HepG2 (cell line): ENCODE measurements at regions of chr6 and their contacts with region 1.

Region 1: DNA sequence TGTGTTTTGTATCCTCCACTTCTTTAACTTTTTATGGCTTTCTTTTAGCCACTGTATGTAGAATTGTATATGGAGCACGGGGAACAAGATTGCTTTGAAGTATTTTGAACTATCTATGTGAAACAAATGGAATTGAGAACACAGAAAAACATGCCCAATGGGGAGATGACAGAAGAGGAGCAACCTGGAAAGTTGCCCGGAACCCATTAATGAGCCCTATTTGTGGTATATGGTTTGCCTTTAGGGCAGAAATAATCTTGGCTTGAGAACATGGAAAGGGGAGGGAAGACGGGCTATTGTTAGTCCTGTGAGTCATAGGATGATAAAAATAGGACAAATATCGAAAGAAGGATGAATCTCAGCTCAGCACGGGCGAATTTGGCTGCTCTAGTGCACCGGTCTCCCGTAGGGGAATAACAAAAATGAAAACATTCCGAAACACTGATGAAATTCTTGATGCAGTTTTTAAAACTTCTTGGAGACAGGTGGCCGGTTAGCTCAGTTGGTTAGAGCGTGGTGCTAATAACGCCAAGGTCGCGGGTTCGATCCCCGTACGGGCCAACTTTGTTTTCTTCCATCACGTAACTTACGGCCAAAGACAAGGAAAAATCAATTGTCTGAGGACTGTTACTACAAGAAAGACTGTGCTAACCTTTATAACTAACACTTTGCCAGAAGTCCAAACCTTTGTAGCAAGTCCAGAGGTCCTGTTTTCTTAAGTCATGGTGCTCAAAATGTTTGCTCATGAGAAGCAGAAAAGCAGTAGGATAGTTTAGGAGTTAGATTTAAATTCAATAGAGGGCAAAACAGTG is 15.7 kb downstream of the HMGN4 start:
- DNase-seq: peak; percentile 81
- ATAC-seq: peak; percentile 39
- H3K4me3 ChIP-seq: peak overlapping the region; percentile 77 to 81 (median 80)
- H3K27ac ChIP-seq: peak overlapping the region; percentile 39
- H3K4me1 ChIP-seq: peaks cover 51% of the 10 kb centered on the region
- H3K27me3 ChIP-seq: no peaks in the 10 kb centered on the region; a peak in 1 of 5 replicates
- CTCF ChIP-seq: no peak
- EP300 ChIP-seq: no peak
- POLR2A ChIP-seq: no peak
- RAD21 ChIP-seq: 0 out of 2 replicates have a peak, but pooled peaks have one; percentile 5

Region 2: DNA sequence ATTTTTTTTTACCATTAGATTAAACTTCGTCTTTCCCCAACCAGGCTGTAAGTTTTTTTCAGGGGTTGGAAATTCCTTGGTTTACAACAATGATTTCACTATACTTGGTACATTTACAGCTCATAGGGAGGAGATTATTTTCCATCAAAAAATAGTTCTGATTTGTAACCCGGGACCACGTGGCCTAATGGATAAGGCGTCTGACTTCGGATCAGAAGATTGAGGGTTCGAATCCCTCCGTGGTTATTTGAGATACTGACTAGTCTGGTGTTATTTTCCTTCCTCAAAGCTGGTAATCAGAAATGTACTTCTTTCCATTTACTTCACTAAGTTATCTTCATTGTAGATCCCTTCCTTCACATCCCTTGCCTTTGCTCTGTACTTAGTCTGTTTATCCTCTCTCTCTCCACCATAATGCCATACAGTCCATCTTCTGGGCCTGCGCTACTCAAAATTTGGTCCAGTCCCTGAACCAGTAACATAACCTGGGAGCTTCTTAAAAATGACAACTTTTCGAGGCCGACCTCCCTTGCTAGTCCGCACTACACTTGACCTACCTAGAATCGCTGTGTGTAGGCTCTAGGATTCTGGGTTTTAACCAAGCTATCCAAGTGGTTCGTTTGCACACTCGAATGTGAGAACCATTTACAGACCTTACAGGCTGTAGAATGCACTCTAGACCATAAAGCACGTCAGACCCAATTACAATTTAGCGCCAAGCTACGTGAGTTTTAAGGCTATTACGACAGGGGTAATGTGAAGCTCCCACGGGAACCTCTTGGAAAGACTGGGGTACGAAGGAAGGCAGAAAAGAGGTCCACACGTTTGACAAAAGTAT is 231.0 kb before region 1 on chr6:
- CTCF ChIA-PET with region 1: no interaction called
- POLR2A ChIA-PET with region 1: interaction called, 5 read pairs
- in situ Hi-C with region 1: no loop called
- intact Hi-C with region 1: loop called (anchors 1 kb)
- DNase-seq: peak; percentile 93
- ATAC-seq: peak; percentile 64
- H3K4me3 ChIP-seq: peak overlapping the region; percentile 61 to 89 (median 78)
- H3K27ac ChIP-seq: peak overlapping the region; percentile 76
- H3K4me1 ChIP-seq: peaks cover 65% of the 10 kb centered on the region
- H3K27me3 ChIP-seq: no peaks in the 10 kb centered on the region; a peak in 1 of 5 replicates
- CTCF ChIP-seq: no peak
- EP300 ChIP-seq: no peak
- POLR2A ChIP-seq: no peak
- RAD21 ChIP-seq: no peak

Region 3: DNA sequence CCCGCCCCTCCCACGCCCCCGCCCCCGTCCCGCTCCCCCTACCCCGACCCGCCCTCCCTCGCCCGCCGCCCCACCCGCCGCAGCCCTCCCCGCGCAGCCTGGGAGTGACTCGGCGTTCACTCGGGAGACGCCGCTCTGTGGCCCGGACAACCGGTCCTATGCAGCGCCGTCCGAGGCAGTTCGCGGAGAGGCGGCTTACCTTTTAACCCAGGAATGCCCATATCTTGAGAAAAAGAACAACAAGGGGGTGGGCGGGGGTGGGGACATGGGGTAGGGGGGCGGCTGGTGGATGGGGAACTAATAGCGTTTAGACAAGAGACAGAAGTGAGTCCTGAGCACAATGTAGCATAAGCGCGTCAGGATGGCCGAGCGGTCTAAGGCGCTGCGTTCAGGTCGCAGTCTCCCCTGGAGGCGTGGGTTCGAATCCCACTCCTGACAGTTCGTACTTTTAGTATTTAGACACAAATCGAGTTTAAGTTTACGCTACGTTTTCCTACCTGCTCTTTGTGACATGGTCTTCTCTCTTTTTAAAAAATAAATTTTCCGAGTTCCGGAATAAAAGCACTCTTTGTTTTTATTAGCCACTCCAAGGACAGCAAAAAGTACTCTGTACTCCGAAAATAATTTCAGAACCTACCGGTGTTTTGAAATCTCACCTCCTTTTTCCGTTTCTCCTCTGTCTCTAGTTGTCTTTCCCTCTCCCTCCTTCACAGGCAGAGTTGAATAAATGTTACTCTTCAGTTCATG is 32.8 kb before region 1 on chr6:
- CTCF ChIA-PET with region 1: no interaction called
- POLR2A ChIA-PET with region 1: no interaction called
- in situ Hi-C with region 1: no loop called
- intact Hi-C with region 1: loop called (anchors 2 kb)
- DNase-seq: peak; percentile 82
- ATAC-seq: peak; percentile 88
- H3K4me3 ChIP-seq: peak overlapping the region; percentile 62 to 67 (median 62)
- H3K27ac ChIP-seq: peak overlapping the region; percentile 42
- H3K4me1 ChIP-seq: peaks cover 69% of the 10 kb centered on the region
- H3K27me3 ChIP-seq: no peaks in the 10 kb centered on the region
- CTCF ChIP-seq: 0 out of 2 replicates have a peak, but pooled peaks have one; percentile 5
- EP300 ChIP-seq: peak in 1 of 2 experiments; percentile 28; a peak in 1 of 4 replicates
- POLR2A ChIP-seq: peak; percentile 21 to 70
- RAD21 ChIP-seq: no peak

Region 4: GRCh38 chr6:26537846-26538571 is 15.8 kb before region 1 on chr6 and contains the start of gene HMGN4:
- CTCF ChIA-PET with region 1: no interaction called
- POLR2A ChIA-PET with region 1: interaction called, 68 read pairs
- in situ Hi-C with region 1: no loop called
- intact Hi-C with region 1: loop called (anchors 1 kb)
- DNase-seq: peak; percentile 92
- ATAC-seq: peak; percentile 85
- H3K4me3 ChIP-seq: peak within 1 kb of the TSS; percentile 83 to 89 (median 83)
- H3K27ac ChIP-seq: peak within 1 kb of the TSS; percentile 74
- H3K4me1 ChIP-seq: peaks cover 39% of the 10 kb centered on the region
- H3K27me3 ChIP-seq: no peaks in the 10 kb centered on the region
- CTCF ChIP-seq: peak; percentile 48
- EP300 ChIP-seq: no peak
- POLR2A ChIP-seq: peak; percentile 54 to 83; a peak in 3 of 4 replicates
- RAD21 ChIP-seq: peak; percentile 32; the same call in 1 of the 2 replicates
- total RNA-seq, gene HMGN4: 52.1 and 79.1 TPM in 2 replicates

Region 5: DNA sequence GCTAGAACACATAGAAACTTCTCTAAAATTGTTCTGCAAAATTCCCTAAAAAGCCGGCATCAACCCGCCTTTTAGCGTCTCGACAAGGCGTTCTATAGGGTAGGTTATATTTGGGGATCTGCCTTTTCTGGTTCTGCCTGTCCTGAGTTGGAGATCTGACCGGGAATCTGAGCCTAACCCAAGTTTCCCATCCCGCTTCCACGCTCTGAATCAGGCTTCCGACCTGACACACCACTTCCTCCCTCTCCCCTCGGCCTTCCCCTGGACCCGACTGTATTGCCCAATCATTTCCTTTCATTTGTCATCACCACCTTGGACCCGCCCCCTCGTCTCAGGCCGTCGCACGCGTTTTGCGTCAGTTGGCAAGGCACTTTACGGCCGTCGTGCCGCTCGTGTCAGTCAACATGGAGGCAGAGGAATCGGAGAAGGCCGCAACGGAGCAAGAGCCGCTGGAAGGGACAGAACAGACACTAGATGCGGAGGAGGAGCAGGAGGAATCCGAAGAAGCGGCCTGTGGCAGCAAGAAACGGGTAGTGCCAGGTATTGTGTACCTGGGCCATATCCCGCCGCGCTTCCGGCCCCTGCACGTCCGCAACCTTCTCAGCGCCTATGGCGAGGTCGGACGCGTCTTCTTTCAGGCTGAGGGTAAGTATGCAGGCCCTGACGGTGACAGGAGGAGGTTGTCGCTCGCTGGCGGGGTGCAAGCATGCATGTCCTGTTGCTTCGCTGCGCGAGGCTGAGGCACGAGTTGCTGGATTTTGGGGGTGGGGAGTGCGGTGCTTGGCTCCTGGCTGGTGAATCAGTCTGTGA is 42.9 kb after region 1 on chr6 and contains the start of gene ABT1:
- CTCF ChIA-PET with region 1: no interaction called
- POLR2A ChIA-PET with region 1: no interaction called
- in situ Hi-C with region 1: no loop called
- intact Hi-C with region 1: loop called (anchors 1 kb)
- DNase-seq: peak; percentile 99
- ATAC-seq: peak; percentile 74
- H3K4me3 ChIP-seq: peak within 1 kb of the TSS; percentile 87 to 100 (median 88)
- H3K27ac ChIP-seq: peak within 1 kb of the TSS; percentile 80
- H3K4me1 ChIP-seq: peaks cover 31% of the 10 kb centered on the region
- H3K27me3 ChIP-seq: no peaks in the 10 kb centered on the region; a peak in 1 of 5 replicates
- CTCF ChIP-seq: peak; percentile 43
- EP300 ChIP-seq: peak; percentile 42 to 72; a peak in 2 of 4 replicates
- POLR2A ChIP-seq: peak; percentile 86 to 94
- RAD21 ChIP-seq: no peak
- total RNA-seq, gene ABT1: 38.4 and 50.8 TPM in 2 replicates